ENCODE measurements at regions of chr9 and their contacts with region 1.

Region 1: GRCh38 chr9:35945341-35946018 is 12.5 kb downstream of the OR2S2 start:
- DNase-seq: peak; percentile 88 to 94 (median 92)
- ATAC-seq: peak; percentile 81 to 82
- H3K4me3 ChIP-seq: no peak overlapping the region
- H3K27ac ChIP-seq: peak overlapping the region; percentile 11
- H3K4me1 ChIP-seq: peaks cover 10% of the 10 kb centered on the region
- H3K27me3 ChIP-seq: no peaks in the 10 kb centered on the region

Region 2: DNA sequence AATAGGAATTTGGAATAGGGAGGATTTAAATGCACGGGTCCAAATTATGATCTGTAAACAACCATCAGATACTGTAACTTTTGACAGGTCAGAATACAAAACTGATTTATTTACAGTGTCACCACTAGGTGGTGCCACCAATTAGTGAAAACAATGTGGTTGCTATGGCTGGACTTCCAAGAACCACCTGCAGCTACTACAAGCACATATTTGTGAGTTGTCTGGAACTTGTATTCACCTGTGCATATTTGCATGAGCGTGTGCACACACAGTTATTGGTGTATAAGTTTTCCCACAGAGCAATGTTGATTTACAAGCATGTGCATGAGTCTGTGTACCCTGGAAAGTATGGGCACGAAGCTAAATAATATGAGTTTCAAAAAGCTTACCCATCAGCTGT is 42.4 kb before region 1 on chr9:
- intact Hi-C with region 1: loop called (anchors 2 to 5 kb)
- DNase-seq: no peak
- ATAC-seq: no peak
- H3K4me3 ChIP-seq: no peak overlapping the region
- H3K27ac ChIP-seq: no peak overlapping the region
- H3K4me1 ChIP-seq: peaks cover 23% of the 10 kb centered on the region
- H3K27me3 ChIP-seq: no peaks in the 10 kb centered on the region

Measured in right cardiac atrium (tissue), 5 donors.